PC-9 (cell line): ENCODE measurements at regions of chr12 and their contacts with region 1.

Region 1: GRCh38 chr12:80979821-80980220 is 42.1 kb upstream of the LIN7A start:
- DNase-seq: no peak
- H3K4me3 ChIP-seq: no peak overlapping the region
- H3K27ac ChIP-seq: no peak overlapping the region
- H3K4me1 ChIP-seq: no peaks in the 10 kb centered on the region
- H3K27me3 ChIP-seq: no peaks in the 10 kb centered on the region
- CTCF ChIP-seq: no peak

Region 2: DNA sequence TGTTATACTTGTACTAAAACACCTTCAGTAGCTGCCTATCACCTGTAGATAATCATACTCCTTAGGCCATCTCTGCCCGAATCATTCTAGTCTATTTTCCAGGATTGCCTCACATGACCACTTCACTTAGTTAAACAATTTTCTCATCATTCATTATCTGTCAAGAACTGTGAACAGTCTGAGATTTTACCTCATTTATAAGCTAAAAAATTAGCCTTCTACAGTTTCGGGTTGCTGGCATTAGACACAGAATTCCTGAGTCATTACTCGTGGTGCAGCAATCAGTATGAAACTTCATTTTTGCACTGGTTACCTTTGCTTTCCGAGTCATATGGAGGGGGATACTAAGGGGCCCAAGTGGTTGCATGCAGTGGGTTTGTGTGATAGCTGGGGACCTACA is 938.1 kb before region 1 on chr12:
- CTCF ChIA-PET with region 1: no interaction called
- POLR2A ChIA-PET with region 1: no interaction called
- intact Hi-C with region 1: no loop called
- DNase-seq: no peak
- H3K4me3 ChIP-seq: no peak overlapping the region
- H3K27ac ChIP-seq: 0 out of 2 replicates have a peak overlapping the region, but pooled peaks have one; percentile 27
- H3K4me1 ChIP-seq: 0 out of 2 replicates have a peak, but pooled peaks cover 10% of the 10 kb centered on the region
- H3K27me3 ChIP-seq: no peaks in the 10 kb centered on the region
- CTCF ChIP-seq: no peak

Region 3: DNA sequence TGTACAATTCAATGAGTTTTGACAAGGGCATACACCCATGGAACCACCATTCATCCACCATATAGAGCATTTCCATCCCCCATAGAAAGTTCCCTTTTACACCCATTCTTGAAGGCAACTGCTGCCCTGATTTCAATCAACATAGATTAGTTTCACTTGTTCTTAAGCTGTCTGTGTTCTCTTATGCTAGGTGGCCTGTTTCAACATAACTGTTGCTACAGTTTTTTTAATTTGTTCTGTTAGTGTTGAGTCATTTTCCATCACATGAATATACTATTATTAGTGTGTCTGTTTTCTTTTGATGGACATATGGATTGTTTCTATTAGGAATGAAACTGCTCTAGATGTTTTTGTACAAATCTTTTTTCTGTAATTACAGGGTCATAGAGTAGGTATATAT is 412.4 kb before region 1 on chr12:
- CTCF ChIA-PET with region 1: no interaction called
- POLR2A ChIA-PET with region 1: no interaction called
- intact Hi-C with region 1: no loop called
- DNase-seq: no peak
- H3K4me3 ChIP-seq: no peak overlapping the region
- H3K27ac ChIP-seq: no peak overlapping the region
- H3K4me1 ChIP-seq: no peaks in the 10 kb centered on the region
- H3K27me3 ChIP-seq: no peaks in the 10 kb centered on the region
- CTCF ChIP-seq: no peak

Region 4: GRCh38 chr12:80778005-80778541 is 201.7 kb before region 1 on chr12:
- CTCF ChIA-PET with region 1: no interaction called
- POLR2A ChIA-PET with region 1: interaction called, 12 read pairs
- intact Hi-C with region 1: no loop called
- DNase-seq: peak; percentile 26 to 38
- H3K4me3 ChIP-seq: no peak overlapping the region
- H3K27ac ChIP-seq: peak overlapping the region; percentile 75
- H3K4me1 ChIP-seq: peaks cover 12% of the 10 kb centered on the region
- H3K27me3 ChIP-seq: no peaks in the 10 kb centered on the region
- CTCF ChIP-seq: no peak